WTC11 (cell line): ENCODE measurements at regions of chr5 and their contacts with region 1.

Region 1: GRCh38 chr5:73498057-73499008 is at the start of gene BTF3:
- DNase-seq: peak; percentile 89
- ATAC-seq: peak; percentile 86
- H3K4me3 Mint-ChIP-seq: peak within 1 kb of the TSS; percentile 91
- H3K27ac Mint-ChIP-seq: peak within 1 kb of the TSS; percentile 96
- H3K4me1 Mint-ChIP-seq: peaks cover 49% of the 10 kb centered on the region
- H3K27me3 Mint-ChIP-seq: no peaks in the 10 kb centered on the region
- CTCF ChIP-seq: no peak
- total RNA-seq, gene BTF3: 736 to 764 TPM (median 736 TPM) in 3 replicates

Region 2: GRCh38 chr5:72720205-72720604 is 778.1 kb before region 1 on chr5:
- CTCF ChIA-PET with region 1: no interaction called
- POLR2A ChIA-PET with region 1: no interaction called
- DNase-seq: no peak
- ATAC-seq: no peak
- H3K4me3 Mint-ChIP-seq: no peak overlapping the region
- H3K27ac Mint-ChIP-seq: no peak overlapping the region
- H3K4me1 Mint-ChIP-seq: no peaks in the 10 kb centered on the region
- H3K27me3 Mint-ChIP-seq: no peaks in the 10 kb centered on the region; the same call in 1 of the 2 replicates
- CTCF ChIP-seq: no peak

Region 3: DNA sequence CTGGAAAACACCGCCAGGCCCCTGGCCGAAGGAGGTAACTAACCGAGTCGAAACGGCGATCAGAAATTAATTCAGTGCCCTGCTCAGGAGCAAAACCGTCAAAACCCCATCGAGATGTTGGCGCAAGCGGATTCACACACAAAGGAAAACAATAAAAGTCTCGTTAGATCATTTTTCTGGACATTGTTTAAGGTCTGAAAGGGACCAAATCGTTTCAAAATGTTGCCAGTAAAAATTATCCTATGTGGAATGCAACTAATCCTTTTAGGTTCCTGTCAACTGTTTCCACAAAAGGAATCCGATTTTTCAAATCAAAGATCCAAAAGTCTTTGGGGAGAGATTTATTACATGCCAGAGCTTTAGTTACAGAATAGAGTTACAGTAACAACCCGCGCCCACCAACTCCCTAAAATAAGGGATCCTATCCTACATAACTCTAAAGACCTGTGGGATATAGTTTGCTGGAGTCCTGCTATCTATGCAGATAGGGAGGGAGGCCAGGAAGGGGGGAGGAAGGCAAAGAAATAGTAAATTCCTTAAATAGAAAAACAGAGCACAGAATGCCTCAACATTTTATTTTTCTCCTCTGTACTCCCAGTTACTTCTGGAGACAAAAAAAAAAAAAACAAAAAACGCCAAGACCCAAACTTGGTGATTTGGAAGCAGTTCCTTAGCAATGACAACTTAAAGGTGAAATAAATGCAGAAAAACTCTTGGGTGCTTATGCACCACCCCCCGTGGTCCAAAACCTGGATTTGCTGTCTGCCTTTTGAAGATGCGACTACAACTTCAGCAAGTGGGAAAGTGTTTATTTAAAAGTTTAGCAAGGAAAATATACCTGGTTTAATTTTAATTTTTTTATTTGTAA is 60.3 kb before region 1 on chr5:
- CTCF ChIA-PET with region 1: no interaction called
- POLR2A ChIA-PET with region 1: no interaction called
- DNase-seq: no peak
- ATAC-seq: no peak
- H3K4me3 Mint-ChIP-seq: peak overlapping the region; percentile 70
- H3K27ac Mint-ChIP-seq: no peak overlapping the region
- H3K4me1 Mint-ChIP-seq: peaks cover 46% of the 10 kb centered on the region
- H3K27me3 Mint-ChIP-seq: peaks cover 98% of the 10 kb centered on the region
- CTCF ChIP-seq: no peak

Region 4: DNA sequence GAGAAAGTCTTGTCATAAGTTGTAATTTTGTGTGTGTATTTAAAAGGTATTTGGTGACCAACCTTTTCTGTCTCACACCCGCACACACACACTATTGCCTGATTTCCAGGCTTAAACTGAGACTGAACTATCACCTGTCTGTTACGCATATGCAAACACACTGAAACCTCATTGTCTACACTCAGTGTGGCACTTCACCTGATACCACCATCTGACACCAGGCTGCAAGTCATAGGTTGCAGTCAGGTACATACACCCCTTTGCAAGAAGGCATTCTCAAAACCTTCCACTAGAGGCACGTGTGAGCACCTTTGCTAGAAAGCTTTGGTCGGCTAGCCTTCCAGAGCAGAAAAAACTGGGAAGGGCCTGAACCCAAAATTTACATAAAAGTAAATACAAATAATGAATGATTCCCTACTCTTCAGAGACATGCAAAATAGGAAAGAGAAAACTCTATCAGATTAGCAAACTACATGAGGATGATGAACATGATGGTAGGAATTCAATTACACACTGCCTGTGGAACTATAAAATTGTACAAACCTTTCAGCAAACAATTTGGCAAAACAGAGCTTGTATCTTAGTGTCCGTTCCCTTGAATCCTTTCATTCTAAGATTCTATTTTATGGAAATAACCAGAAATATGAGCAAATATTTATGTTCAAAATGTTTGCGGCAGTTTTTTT is 43.8 kb before region 1 on chr5:
- CTCF ChIA-PET with region 1: interaction called, 13 read pairs
- POLR2A ChIA-PET with region 1: interaction called, 3 read pairs
- DNase-seq: peak; percentile 83
- ATAC-seq: peak; percentile 93
- H3K4me3 Mint-ChIP-seq: no peak overlapping the region
- H3K27ac Mint-ChIP-seq: peak overlapping the region; percentile 70
- H3K4me1 Mint-ChIP-seq: peaks cover 25% of the 10 kb centered on the region
- H3K27me3 Mint-ChIP-seq: peaks cover 49% of the 10 kb centered on the region
- CTCF ChIP-seq: peak; percentile 48; the same call in 1 of the 2 replicates

Region 5: GRCh38 chr5:73674669-73675004 is 176.3 kb after region 1 on chr5:
- CTCF ChIA-PET with region 1: no interaction called
- POLR2A ChIA-PET with region 1: no interaction called
- DNase-seq: no peak
- ATAC-seq: no peak
- H3K4me3 Mint-ChIP-seq: no peak overlapping the region
- H3K27ac Mint-ChIP-seq: no peak overlapping the region
- H3K4me1 Mint-ChIP-seq: 0 out of 2 replicates have a peak, but pooled peaks cover 4% of the 10 kb centered on the region
- H3K27me3 Mint-ChIP-seq: no peaks in the 10 kb centered on the region
- CTCF ChIP-seq: no peak

Region 6: GRCh38 chr5:74408150-74409043 is 910.1 kb after region 1 on chr5:
- CTCF ChIA-PET with region 1: no interaction called
- POLR2A ChIA-PET with region 1: no interaction called
- DNase-seq: no peak
- ATAC-seq: no peak
- H3K4me3 Mint-ChIP-seq: no peak overlapping the region
- H3K27ac Mint-ChIP-seq: no peak overlapping the region
- H3K4me1 Mint-ChIP-seq: peaks cover 12% of the 10 kb centered on the region
- H3K27me3 Mint-ChIP-seq: no peaks in the 10 kb centered on the region
- CTCF ChIP-seq: no peak